Posterior cingulate gyrus (tissue), 11 donors: ENCODE measurements at regions of chr11 and their contacts with region 1.

Region 1: DNA sequence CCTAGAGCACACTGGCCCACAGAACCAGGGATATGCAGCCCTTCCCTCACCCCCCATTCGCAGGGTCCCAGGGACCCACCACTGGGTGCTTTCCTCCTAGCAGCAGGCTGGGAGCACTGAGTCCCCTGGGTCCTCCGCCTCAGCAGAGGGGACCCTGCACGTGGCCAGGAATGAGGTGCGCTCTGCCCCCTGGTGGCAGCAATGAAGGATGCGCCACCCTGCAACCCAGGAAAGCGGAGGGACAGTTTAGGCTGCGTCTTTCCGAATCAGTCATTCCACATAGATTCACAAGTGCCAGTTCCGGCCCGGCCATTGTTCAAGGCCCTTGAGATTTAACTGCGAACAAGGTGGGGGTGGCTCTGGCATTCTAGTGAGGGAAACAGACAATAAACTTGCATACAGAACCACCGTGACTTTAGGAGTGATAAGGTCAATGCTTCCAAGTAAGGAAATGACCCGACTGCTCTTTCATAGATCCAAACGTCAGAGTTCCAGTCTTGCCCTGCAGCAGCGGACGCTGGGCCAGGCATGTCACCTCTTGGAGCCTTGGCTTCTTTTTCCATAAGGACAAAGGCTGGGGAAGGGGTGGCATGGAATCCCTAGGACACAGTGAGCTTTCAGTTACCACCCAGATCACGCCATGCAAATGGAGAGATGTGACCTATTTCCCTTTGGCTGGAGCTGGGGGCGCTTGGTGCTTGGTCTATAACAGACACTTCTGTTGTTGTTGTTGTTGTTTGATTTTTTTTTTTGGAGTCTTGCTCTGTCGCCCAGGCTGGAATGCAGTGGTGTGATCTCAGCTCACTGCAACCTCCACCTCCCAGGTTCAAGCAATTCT is 7.7 kb downstream of the RIN1 start:
- DNase-seq: peak; percentile 64 to 97 (median 80)

Region 2: DNA sequence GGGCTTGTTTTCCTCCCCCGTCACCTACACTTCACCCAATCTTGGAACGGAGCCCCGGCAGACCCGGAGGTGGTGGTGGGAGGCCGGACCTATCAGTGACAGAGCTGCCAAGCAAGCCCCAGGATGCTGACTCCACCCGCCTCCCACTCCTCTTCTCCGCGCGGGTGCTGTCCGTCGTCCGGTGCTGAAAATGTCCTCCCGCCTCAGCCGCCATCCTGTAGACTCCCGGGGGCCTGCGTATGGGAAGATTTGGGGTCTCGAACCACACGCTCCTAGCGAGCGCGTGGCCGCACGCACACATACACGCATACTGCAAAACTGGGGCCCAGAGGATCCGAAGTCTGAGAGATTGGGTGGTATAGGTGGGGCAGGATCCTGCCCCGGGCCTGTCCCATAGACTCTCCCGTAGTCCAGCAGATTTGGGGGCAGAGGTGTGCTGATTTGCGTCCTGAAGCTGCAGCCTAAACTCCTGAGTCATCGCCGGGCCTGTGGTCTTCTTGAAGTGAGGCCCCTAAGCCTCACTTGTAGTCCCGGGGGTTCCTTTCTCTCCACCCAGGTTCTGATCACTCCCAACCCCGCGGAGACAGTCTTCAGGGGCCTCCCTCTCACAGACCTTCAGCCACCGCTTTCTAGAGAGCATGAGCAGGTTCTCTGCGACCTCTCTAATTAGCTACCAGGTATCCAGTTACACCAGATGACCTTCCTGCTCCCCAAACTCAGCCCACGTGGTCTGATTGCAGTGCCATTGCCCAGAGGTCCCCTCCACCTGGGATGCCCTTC is 38.8 kb before region 1 on chr11:
- intact Hi-C with region 1: loop called (anchors 5 kb)
- DNase-seq: peak in 6 of 10 donors; percentile 56 to 92 (median 68)

Region 3: DNA sequence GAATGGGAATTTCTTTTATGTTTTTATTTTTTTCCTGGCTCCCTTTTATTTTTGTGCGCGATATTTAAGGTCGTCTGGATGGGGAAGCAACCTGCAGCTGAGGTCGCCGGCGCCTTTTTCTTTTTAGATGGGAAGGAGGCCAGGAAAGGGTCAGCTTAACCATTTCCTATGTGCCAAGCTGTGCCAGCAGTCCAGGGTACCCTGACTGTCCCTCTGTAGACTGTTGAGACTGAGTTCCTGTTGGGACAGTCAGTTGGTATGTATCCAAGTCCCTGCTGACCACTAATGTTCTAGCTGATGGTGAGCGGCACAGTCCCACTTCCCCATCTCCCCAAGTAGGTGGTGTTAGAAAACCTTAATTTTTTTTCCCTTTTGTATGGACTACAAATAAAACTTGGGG is 298.4 kb after region 1 on chr11:
- intact Hi-C with region 1: no loop called
- DNase-seq: peak in 1 of 10 donors; percentile 32